Activated naive CD4-positive, alpha-beta T cell treated with anti-CD3 and anti-CD28 coated beads for 36 hours (primary cell): ENCODE measurements at regions of chr5 and their contacts with region 1.

Region 1: GRCh38 chr5:177006265-177006972 is at the start of gene UIMC1:
- DNase-seq: peak; percentile 90
- H3K4me3 Mint-ChIP-seq: peak within 1 kb of the TSS; percentile 93
- H3K27ac Mint-ChIP-seq: peak within 1 kb of the TSS; percentile 93
- H3K4me1 Mint-ChIP-seq: peaks cover 29% of the 10 kb centered on the region
- H3K27me3 Mint-ChIP-seq: no peaks in the 10 kb centered on the region
- total RNA-seq, gene UIMC1: 53.4 to 54.6 TPM

Region 2: DNA sequence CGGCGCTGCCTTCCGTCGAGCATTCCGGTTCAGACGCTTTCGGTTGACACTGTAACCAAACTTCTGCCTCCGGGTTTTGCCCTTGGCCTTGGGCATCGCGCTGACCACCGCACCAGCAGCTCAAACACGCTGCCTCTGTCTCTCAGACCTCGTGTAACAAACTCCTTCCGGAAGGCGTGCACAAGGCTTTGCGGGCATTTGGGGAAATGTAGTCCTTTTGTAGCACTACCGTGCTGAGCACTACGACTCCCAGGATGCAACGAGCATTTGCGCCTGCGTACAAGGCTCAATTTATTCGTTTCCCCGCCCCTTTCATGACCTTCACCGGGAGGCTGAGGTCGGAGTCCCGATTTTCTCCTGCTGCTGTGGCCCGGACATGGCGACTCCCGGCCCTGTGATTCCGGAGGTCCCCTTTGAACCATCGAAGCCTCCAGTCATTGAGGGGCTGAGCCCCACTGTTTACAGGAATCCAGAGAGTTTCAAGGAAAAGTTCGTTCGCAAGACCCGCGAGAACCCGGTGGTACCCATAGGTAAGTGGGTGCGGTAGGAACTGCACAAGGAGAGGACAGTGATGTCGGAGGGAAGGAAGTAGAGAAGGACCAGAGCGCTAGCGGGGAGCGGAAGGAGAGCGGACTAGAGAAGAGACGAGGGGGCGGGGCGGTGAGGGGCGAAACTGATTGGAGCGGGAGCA is 617.8 kb before region 1 on chr5 and contains the starts of genes HIGD2A and NOP16:
- CTCF ChIA-PET with region 1: no interaction called
- intact Hi-C with region 1: loop called (anchors 1 kb)
- DNase-seq: peak; percentile 100
- H3K4me3 Mint-ChIP-seq: peak within 1 kb of the TSS; percentile 100
- H3K27ac Mint-ChIP-seq: peak within 1 kb of the TSS; percentile 100
- H3K4me1 Mint-ChIP-seq: peaks cover 33% of the 10 kb centered on the region
- H3K27me3 Mint-ChIP-seq: no peaks in the 10 kb centered on the region
- total RNA-seq, gene HIGD2A: 154 to 155 TPM
- total RNA-seq, gene NOP16: 42.1 to 43.1 TPM

Region 3: DNA sequence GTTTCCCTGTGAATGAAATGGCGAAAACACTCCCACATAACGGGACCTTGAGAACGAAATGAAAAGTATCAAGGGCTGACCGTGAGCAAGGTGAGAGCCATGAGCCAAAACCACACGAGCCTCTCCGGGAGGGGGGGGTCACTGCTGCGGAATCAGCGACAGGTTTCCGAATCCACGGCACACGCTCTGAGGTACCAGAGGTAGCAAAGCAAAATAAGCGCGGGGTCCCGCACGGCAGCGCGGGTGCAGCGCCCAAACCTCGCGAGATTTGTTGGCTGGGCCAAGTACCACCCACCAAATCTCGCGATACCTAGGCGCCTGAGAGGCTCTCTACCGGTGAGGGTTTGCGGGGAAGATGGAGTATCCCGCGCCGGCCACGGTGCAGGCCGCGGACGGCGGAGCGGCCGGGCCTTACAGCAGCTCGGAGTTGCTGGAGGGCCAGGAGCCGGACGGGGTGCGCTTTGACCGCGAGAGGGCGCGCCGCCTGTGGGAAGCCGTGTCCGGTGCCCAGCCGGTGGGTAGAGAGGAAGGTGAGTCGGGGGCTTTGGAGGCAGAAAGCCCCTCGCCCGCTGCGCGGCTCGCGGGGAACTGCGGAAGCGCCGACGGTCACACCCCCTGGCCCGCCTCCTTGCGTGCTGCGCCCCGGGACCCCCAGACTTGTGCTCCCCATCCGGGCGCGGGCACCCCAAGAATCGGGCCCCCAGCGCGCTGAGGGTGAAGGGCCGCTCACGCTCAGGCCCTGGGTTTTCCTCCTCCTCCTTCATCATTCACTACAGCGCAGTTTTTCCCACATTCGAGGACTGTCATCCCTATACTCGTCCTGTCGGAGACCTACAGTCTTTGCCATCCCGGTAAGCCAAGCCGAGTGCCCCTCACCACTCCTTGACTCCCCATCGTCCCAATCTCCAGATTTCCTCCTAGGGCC is 16.2 kb after region 1 on chr5 and contains the start of gene ZNF346:
- CTCF ChIA-PET with region 1: interaction called, 15 read pairs
- intact Hi-C with region 1: loop called (anchors 1 kb)
- DNase-seq: peak; percentile 95
- H3K4me3 Mint-ChIP-seq: peak within 1 kb of the TSS; percentile 99
- H3K27ac Mint-ChIP-seq: peak within 1 kb of the TSS; percentile 91
- H3K4me1 Mint-ChIP-seq: peaks cover 39% of the 10 kb centered on the region
- H3K27me3 Mint-ChIP-seq: no peaks in the 10 kb centered on the region
- total RNA-seq, gene ZNF346: 13.4 to 15.1 TPM